Caco-2 (cell line): ENCODE measurements at regions of chr6 and their contacts with region 1.

Region 1: DNA sequence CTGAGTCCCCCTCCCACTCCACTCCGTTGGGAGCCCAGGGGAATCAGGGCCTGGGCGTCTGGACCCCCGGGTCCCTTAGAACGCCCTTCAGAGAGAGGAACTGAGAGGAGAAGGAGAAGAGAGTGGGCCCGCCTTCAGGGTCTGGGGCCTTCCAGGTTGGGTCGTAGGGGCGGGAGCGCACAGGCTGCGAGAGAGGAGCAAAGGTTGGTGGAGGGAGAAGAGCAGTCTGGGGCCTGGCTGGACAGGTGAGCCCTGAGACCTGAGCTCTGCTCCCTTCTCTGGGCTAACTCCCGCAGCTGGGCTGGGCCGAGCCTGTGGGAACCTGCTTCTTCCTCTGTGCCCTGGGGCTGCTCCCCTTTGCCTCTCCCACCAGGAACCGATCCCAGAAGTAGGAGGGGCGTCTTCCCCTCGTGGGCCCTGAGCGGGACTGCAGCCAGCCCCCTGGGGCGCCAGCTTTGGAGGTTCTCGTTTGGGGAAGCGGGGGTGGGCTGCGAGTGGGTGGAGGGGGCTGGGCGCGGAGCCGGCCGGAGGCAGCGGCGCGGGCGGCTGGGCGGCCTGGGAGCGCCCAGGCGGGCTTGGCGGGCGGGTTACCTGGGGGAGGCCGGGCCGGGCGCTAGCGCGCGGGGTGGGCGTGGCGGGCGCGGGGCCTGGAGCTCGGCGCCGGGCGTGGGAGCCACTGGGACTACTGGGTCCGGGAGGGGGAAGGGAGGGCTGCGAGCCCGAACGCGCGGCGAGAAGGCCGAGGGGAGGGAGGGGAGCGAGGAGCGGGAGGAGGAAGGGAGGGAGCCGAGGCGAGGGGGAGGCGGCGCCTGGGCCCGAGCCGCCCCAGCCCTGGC is at the start of gene DDR1:
- DNase-seq: peak; percentile 81 to 82
- H3K4me3 ChIP-seq: peak within 1 kb of the TSS; percentile 46
- H3K4me3 Mint-ChIP-seq: peak within 1 kb of the TSS; percentile 83
- H3K27ac Mint-ChIP-seq: peak within 1 kb of the TSS; percentile 82
- H3K4me1 ChIP-seq: peaks cover 39% of the 10 kb centered on the region
- H3K4me1 Mint-ChIP-seq: peaks cover 43% of the 10 kb centered on the region
- H3K27me3 ChIP-seq: no peaks in the 10 kb centered on the region
- H3K27me3 Mint-ChIP-seq: no peaks in the 10 kb centered on the region
- CTCF ChIP-seq: no peak
- total RNA-seq, gene DDR1: 113 and 115 TPM in 2 replicates

Region 2: GRCh38 chr6:30556066-30556905 is 327.6 kb before region 1 on chr6 and contains the start of gene GNL1:
- CTCF ChIA-PET with region 1: no interaction called
- POLR2A ChIA-PET with region 1: interaction called, 12 read pairs
- intact Hi-C with region 1: no loop called
- DNase-seq: peak; percentile 98 to 99
- H3K4me3 ChIP-seq: peak within 1 kb of the TSS; percentile 88
- H3K4me3 Mint-ChIP-seq: peak within 1 kb of the TSS; percentile 95
- H3K27ac Mint-ChIP-seq: peak within 1 kb of the TSS; percentile 100
- H3K4me1 ChIP-seq: peaks cover 5% of the 10 kb centered on the region; the same call in 1 of the 2 replicates
- H3K4me1 Mint-ChIP-seq: peaks cover 14% of the 10 kb centered on the region
- H3K27me3 ChIP-seq: no peaks in the 10 kb centered on the region
- H3K27me3 Mint-ChIP-seq: no peaks in the 10 kb centered on the region
- CTCF ChIP-seq: no peak
- total RNA-seq, gene GNL1: 84.1 and 94.1 TPM in 2 replicates

Region 3: DNA sequence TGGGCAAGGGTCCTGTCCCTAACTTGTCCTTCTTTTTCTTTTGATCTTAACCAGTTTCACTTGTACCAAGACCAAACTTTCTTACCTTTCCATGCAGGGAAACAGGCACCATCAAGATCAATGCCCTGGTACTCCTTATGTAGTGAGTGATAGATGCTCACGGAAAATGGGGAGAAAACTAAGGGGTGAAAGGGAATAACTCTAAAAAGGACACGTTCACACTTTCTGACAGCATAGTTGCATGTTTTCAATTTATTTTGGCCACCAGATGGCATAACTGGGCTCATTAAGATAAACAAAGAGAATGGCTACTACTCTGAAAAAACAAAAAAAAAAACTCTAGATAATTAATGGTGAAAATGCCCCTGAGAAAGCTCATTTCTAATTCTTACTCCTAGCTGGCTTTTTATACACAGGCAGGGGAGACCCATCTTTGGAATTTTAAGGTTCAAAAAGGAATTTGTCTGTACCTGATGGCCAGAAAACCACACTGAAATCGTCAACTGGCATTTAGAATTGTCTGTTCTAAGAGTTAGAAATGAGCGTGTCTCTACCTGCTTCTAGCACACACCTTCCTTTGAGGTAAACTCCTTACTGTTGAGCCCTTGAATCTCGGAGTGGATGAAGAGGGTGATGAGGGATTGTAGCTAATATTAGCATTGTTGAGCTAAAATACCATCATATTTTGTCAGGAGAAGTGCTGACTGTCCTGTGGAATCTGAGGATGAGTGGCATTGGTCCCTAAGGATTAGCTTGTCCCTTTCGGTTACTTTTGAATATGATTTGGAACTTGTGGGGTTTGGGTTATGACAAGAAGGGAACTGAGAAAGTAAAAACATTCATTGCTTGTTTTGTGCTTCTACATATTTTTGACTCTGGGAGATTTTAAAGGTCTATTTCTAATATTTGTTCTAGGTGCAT is 61.8 kb before region 1 on chr6:
- CTCF ChIA-PET with region 1: interaction called, 14 read pairs
- POLR2A ChIA-PET with region 1: no interaction called
- intact Hi-C with region 1: no loop called
- DNase-seq: peak in 1 of 2 experiments; percentile 44
- H3K4me3 ChIP-seq: no peak overlapping the region
- H3K4me3 Mint-ChIP-seq: peak overlapping the region; percentile 65
- H3K27ac Mint-ChIP-seq: peak overlapping the region; percentile 94
- H3K4me1 ChIP-seq: peaks cover 50% of the 10 kb centered on the region
- H3K4me1 Mint-ChIP-seq: peaks cover 42% of the 10 kb centered on the region
- H3K27me3 ChIP-seq: no peaks in the 10 kb centered on the region
- H3K27me3 Mint-ChIP-seq: no peaks in the 10 kb centered on the region
- CTCF ChIP-seq: peak; percentile 28 to 53

Region 4: GRCh38 chr6:30844091-30844535 is 39.8 kb before region 1 on chr6:
- CTCF ChIA-PET with region 1: interaction called, 21 read pairs
- POLR2A ChIA-PET with region 1: interaction called, 4 read pairs
- intact Hi-C with region 1: no loop called
- DNase-seq: peak; percentile 69 to 81
- H3K4me3 ChIP-seq: no peak overlapping the region
- H3K4me3 Mint-ChIP-seq: peak overlapping the region; percentile 13
- H3K27ac Mint-ChIP-seq: peak overlapping the region; percentile 79
- H3K4me1 ChIP-seq: peaks cover 49% of the 10 kb centered on the region
- H3K4me1 Mint-ChIP-seq: peaks cover 36% of the 10 kb centered on the region
- H3K27me3 ChIP-seq: no peaks in the 10 kb centered on the region
- H3K27me3 Mint-ChIP-seq: no peaks in the 10 kb centered on the region
- CTCF ChIP-seq: peak in 1 of 2 experiments; percentile 28

Region 5: DNA sequence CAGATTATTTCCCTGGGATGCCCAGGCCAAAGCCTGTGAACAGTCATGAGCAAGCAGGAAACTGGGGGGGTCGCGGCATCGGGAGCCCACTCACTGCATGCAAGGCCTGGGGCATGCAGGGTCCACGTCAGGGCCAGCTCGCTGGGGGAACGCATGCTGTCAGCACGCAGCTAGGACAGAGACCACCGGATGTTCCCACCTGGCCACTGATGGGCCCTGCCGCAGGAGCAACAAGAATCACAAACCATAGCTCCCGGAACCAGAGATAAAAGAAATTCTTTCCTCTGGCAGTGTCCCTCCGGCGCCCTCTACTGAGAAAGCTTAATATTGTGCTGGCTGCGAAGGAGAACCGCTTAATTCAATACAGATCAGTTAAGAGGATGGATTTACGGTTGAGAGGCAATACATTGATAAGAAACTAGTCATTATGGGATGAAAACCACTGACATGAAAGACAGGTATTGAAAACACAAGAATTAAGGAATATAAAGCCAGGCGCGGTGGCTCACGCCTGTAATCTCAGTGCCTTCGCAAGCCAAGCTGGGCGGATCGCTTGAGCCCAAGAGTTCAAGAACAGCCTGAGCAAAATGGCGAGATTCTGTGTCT is 195.9 kb after region 1 on chr6:
- CTCF ChIA-PET with region 1: interaction called, 11 read pairs
- POLR2A ChIA-PET with region 1: no interaction called
- intact Hi-C with region 1: no loop called
- DNase-seq: peak; percentile 71 to 78
- H3K4me3 ChIP-seq: no peak overlapping the region
- H3K4me3 Mint-ChIP-seq: no peak overlapping the region
- H3K27ac Mint-ChIP-seq: no peak overlapping the region
- H3K4me1 ChIP-seq: 0 out of 2 replicates have a peak, but pooled peaks cover 5% of the 10 kb centered on the region
- H3K4me1 Mint-ChIP-seq: peaks cover 8% of the 10 kb centered on the region
- H3K27me3 ChIP-seq: no peaks in the 10 kb centered on the region
- H3K27me3 Mint-ChIP-seq: peaks cover 5% of the 10 kb centered on the region
- CTCF ChIP-seq: peak; percentile 63 to 82

Region 6: DNA sequence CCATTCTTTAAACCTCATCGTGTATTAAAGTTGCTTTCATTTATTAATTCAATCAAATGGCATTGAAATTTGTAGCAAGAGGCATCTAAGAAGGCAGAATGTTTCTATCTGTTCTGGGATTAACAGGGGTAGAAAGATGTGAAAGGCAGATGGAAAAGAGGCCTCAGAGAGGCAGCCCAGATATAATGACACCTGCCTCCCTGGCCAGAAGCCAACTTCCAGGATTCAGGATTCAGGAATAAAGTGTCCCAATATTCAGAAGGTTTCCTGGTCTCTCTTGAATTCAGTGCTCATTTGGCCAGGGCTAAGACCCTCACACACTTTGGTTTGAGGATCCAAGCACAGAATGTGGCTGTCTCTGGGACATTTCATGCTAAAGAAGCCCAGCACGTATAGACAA is 433.1 kb after region 1 on chr6:
- CTCF ChIA-PET with region 1: no interaction called
- POLR2A ChIA-PET with region 1: no interaction called
- intact Hi-C with region 1: no loop called
- DNase-seq: no peak
- H3K4me3 ChIP-seq: no peak overlapping the region
- H3K4me3 Mint-ChIP-seq: no peak overlapping the region
- H3K27ac Mint-ChIP-seq: no peak overlapping the region
- H3K4me1 ChIP-seq: no peaks in the 10 kb centered on the region
- H3K4me1 Mint-ChIP-seq: no peaks in the 10 kb centered on the region
- H3K27me3 ChIP-seq: no peaks in the 10 kb centered on the region
- H3K27me3 Mint-ChIP-seq: peaks cover 19% of the 10 kb centered on the region
- CTCF ChIP-seq: no peak